Left cardiac atrium (tissue), 4 donors: ENCODE measurements at regions of chr17 and their contacts with region 1.

Region 1: GRCh38 chr17:64520359-64520758 is 13.6 kb downstream of the CEP95 start:
- DNase-seq: no peak
- ATAC-seq: no peak

Region 2: DNA sequence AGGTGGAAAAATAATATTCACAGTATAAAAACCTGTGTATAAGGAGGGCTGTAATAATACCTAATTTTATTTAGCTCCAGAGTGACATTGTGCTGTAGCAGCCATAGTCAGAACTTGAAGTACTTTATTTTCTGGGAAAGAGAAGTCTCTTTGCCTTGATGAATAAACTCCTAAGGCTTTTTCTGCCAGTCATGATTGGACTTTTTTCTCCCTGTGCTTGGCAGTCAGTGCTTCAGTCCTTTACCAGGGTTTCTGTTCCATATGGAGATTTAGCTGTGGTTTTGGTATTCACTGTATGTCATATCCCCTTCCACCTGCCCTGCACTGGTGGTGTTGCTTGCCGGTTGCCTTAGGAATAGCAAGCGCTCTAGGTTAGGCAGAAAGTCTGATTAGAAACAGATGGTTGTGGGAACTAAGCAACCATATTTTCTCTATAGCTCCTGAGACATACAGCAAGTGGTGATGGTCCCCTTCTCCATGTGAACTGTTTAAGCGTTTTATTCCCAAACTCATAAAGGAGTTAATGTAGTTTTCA is 721.7 kb before region 1 on chr17:
- intact Hi-C with region 1: loop called in 1 of 2 experiments (anchors 10 kb)
- DNase-seq: no peak
- ATAC-seq: no peak

Region 3: GRCh38 chr17:64441772-64442540 is 78.4 kb before region 1 on chr17:
- intact Hi-C with region 1: no loop called
- DNase-seq: peak; percentile 31
- ATAC-seq: peak; percentile 84 to 87

Region 4: GRCh38 chr17:64496786-64497564 is 23.4 kb before region 1 on chr17 and contains the start of gene POLG2:
- intact Hi-C with region 1: no loop called
- DNase-seq: peak; percentile 96
- ATAC-seq: peak; percentile 95 to 98
- total RNA-seq, gene POLG2: 6.6 to 7.7 TPM